ENCODE measurements at regions of chr5 and their contacts with region 1.

Region 1: GRCh38 chr5:178279725-178280438 is 47.3 kb upstream of the PHYKPL start:
- DNase-seq: peak; percentile 36 to 98
- H3K4me3 ChIP-seq: peak overlapping the region in 1 of 4 experiments; percentile 35; a peak in 1 of 8 replicates
- H3K27ac ChIP-seq: no peak overlapping the region
- H3K4me1 ChIP-seq: peaks cover 0 to 4% (median 2%) of the 10 kb centered on the region in 4 experiments; a peak in 2 of 7 replicates
- H3K27me3 ChIP-seq: peaks cover 0 to 10% (median 2%) of the 10 kb centered on the region in 4 experiments; a peak in 4 of 7 replicates
- CTCF ChIP-seq: peak in 2 of 3 experiments; percentile 95 to 99; a peak in 3 of 4 replicates
- EP300 ChIP-seq: no peak
- POLR2A ChIP-seq: no peak
- RAD21 ChIP-seq: peak; percentile 99 to 100

Region 2: DNA sequence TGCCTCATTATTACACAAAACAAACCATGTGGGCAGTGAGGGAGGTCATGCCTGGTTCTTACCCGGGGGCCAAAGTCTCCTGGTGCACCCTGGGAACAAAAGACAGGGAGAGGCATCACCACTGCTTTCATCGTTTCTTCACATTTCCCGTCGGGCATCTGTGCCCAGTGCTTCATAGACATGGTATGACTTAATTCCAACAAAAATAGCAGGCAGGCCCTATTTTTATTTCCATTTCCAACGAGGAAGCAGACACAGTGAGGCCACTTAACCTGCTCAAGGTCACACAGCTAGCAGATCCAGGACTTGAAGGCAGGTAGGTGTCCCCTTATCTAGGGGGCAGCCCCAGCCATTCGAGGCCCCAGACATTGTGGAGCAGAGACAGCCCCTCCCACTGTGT is 12.6 kb before region 1 on chr5:
- CTCF ChIA-PET with region 1: interaction called, 38 read pairs
- POLR2A ChIA-PET with region 1: interaction called, 3 read pairs
- DNase-seq: no peak
- H3K4me3 ChIP-seq: no peak overlapping the region
- H3K27ac ChIP-seq: no peak overlapping the region
- H3K4me1 ChIP-seq: no peaks in the 10 kb centered on the region; a peak in 1 of 7 replicates
- H3K27me3 ChIP-seq: 0 out of 7 replicates have a peak, but pooled peaks cover 0 to 2% (median 0%) of the 10 kb centered on the region in 4 experiments
- CTCF ChIP-seq: no peak
- EP300 ChIP-seq: no peak
- POLR2A ChIP-seq: no peak
- RAD21 ChIP-seq: no peak

Region 3: GRCh38 chr5:178304761-178305645 is 25.1 kb after region 1 on chr5:
- CTCF ChIA-PET with region 1: interaction called, 55 read pairs
- POLR2A ChIA-PET with region 1: no interaction called
- DNase-seq: no peak
- H3K4me3 ChIP-seq: no peak overlapping the region
- H3K27ac ChIP-seq: no peak overlapping the region
- H3K4me1 ChIP-seq: peaks cover 0 to 9% (median 1%) of the 10 kb centered on the region in 4 experiments; a peak in 2 of 7 replicates
- H3K27me3 ChIP-seq: no peaks in the 10 kb centered on the region
- CTCF ChIP-seq: no peak
- EP300 ChIP-seq: no peak
- POLR2A ChIP-seq: no peak
- RAD21 ChIP-seq: no peak

Region 4: DNA sequence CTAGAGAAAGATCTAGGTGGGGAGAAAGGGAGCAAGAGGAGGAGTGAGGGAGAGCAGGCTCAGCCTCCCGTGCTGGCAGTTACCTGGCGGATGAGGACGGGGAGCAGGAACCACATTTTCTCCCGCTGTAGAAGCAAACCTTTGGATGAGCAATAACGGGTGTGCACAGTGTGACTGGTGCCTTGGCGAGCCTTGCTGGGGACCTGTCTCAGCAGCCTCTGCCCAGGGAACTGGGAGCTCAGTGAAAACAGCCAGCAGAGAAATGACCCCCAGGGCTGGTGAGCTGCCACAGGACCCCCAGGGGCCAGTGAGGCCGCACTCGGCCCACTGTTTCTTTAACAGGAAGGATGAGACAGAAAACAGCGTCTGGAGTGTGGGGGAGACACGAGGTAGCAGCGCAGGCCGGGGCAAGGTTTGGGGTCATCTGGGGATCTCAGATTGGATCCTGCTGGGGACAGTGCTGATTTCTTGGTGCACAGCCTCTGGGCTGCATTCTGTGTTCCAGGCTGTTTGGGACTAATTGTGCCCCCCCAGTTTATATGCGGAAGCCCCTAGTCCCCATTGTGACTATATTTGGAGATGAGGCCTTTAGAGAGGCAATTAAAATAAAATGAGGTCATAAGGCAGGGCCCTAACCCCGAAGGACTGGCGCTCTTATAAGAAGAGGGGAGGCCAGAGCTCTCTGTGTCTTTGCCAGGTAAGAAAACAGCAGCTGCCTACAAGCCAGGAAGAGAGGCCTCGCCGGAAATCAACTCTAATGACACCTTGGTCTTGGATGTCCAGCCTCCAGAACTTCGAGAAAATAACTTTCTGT is 71.5 kb after region 1 on chr5:
- CTCF ChIA-PET with region 1: interaction called, 10 read pairs
- POLR2A ChIA-PET with region 1: no interaction called
- DNase-seq: no peak
- H3K4me3 ChIP-seq: no peak overlapping the region
- H3K27ac ChIP-seq: no peak overlapping the region
- H3K4me1 ChIP-seq: peaks cover 4 to 18% (median 11%) of the 10 kb centered on the region in 4 experiments
- H3K27me3 ChIP-seq: no peaks in the 10 kb centered on the region
- CTCF ChIP-seq: no peak
- EP300 ChIP-seq: no peak
- POLR2A ChIP-seq: no peak
- RAD21 ChIP-seq: no peak

Region 5: DNA sequence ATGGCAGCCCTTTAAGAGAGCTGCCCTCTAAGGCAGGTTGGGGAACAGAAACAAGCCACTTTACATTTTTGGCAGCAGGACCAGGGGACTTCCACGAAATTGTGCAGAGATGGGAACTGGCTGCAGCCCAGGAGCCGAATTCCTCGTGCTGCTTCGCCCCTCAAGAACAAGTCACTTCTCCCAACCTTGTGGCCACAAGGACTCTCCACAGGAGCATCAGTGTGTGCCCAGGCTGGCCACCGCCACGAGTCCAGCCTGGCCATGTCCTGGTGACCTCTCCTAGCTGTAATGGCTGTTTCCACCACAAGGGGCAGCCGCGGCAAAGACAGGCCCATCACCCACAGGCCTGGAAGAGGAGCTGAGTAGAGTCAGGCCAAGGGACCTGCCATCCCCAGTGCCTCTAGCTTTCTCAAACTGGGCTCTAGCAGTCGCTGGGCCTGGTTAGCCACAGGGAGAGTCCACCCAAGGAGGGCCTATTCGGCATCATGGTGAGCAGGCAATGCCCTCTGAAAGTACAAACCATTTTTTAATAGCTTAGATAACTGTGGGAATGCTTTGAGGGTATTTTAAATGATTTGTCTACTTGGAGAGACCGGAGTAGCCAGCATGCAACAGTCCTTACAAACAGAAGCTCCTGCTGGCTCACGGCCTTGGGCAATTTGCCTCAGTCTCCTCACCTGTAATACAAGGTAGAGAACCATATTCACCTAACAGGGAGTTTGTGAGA is 181.3 kb after region 1 on chr5:
- CTCF ChIA-PET with region 1: interaction called, 65 read pairs
- POLR2A ChIA-PET with region 1: no interaction called
- DNase-seq: peak; percentile 39 to 96
- H3K4me3 ChIP-seq: no peak overlapping the region
- H3K27ac ChIP-seq: no peak overlapping the region
- H3K4me1 ChIP-seq: peaks cover 0 to 13% (median 8%) of the 10 kb centered on the region in 4 experiments; a peak in 5 of 7 replicates
- H3K27me3 ChIP-seq: no peaks in the 10 kb centered on the region
- CTCF ChIP-seq: peak in 2 of 3 experiments; percentile 87 to 97; a peak in 3 of 4 replicates
- EP300 ChIP-seq: no peak
- POLR2A ChIP-seq: no peak
- RAD21 ChIP-seq: peak; percentile 87 to 91

Region 6: DNA sequence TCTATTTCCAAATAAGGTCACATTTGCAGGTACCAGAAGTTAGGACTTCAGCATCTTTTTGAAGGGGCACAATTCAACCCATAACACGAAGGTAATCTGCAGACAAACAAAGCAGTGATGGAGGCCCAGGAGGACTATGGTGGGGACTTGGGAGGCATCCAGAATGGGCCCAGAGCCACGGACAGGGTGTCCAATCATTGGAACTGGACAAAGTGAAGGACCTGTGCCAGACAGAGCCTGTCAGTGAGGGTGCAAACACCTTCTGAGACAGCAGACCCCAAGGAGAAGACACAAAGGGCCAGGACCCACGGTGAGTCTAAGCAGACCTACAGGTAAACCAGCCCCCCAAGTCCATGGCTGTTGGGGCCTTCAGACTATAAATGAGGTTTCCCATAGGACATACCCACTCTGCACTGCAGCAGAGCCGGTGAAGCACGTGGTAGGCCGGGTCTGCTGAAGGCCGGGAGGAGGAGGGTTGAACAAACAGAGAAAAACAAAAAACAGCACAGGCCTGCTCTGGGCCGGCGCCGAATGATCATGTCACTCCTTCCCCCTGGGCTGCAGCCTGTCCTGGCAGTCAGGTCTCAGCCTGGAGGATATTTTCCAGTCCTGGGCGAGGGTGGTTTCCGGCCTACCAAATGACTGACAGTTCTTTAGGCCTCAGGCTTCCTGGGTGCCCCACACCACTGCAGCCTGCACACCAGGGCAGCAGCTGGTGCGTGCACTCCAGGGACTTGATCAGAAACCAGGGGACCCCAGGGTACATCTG is 225.9 kb after region 1 on chr5:
- CTCF ChIA-PET with region 1: no interaction called
- POLR2A ChIA-PET with region 1: no interaction called
- DNase-seq: no peak
- H3K4me3 ChIP-seq: no peak overlapping the region
- H3K27ac ChIP-seq: no peak overlapping the region
- H3K4me1 ChIP-seq: no peaks in the 10 kb centered on the region; a peak in 1 of 7 replicates
- H3K27me3 ChIP-seq: no peaks in the 10 kb centered on the region
- CTCF ChIP-seq: no peak
- EP300 ChIP-seq: no peak
- POLR2A ChIP-seq: no peak
- RAD21 ChIP-seq: no peak

Region 7: DNA sequence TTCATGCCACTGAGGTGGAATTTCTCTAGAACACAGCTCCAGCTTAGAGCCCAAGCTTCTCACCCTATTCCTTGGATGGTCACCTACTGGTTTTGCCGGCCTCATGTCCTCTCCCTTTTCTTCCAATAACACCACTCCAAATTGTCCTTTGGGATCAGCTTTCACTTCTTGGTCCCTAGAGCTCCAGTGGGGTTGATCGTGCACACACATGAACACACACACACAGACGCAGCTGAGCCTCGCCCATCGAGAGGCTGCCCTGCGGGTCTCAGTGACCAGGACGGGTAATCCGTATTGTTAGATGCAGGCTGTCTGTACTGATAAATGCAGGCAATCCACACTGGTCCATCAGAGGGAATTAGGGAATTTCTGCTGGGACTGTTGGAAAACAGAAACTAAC is 303.4 kb after region 1 on chr5:
- CTCF ChIA-PET with region 1: interaction called, 131 read pairs
- POLR2A ChIA-PET with region 1: no interaction called
- DNase-seq: no peak
- H3K4me3 ChIP-seq: no peak overlapping the region
- H3K27ac ChIP-seq: no peak overlapping the region
- H3K4me1 ChIP-seq: peaks cover 0 to 4% (median 2%) of the 10 kb centered on the region in 4 experiments; a peak in 2 of 7 replicates
- H3K27me3 ChIP-seq: peaks cover 0 to 9% (median 5%) of the 10 kb centered on the region in 4 experiments; a peak in 4 of 7 replicates
- CTCF ChIP-seq: no peak
- EP300 ChIP-seq: no peak
- POLR2A ChIP-seq: no peak
- RAD21 ChIP-seq: no peak